Sigmoid colon (tissue), 7 donors: ENCODE measurements at regions of chr3 and their contacts with region 1.

Region 1: DNA sequence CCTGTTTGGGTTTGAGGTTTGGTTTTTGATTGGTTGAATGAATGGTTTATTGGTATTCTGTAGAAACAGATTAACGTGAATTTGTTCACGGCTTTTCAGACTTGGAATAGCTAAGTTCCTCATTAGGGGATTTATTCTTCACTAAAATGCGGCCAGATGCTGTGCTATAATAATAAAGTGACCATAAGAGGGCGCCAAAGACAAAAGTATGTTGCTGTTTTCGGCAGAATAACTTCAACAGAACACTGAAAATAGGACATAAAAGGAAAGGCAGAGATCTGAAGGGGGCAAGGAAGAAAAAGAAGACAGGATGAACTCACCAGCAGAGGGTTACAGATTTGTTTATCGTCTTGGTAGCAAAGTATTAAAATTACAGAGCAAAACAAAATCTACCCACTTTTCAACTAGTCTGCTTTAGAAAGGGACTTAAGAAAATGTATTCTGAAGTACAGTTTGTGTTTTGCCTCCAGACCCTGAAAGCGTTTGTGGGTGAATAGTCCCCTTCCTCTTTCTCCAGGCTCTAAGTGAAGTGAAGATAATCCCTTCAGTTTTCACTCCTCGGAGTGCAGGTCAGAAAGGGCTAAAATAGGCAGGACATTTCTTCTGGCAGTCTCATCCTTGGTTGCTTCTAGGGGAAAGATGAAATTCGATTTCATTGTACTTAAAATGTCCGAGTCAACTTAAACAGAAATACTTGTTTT is 147.6 kb downstream of the IL20RB start:
- DNase-seq: no peak
- H3K4me3 ChIP-seq: no peak overlapping the region
- H3K27ac ChIP-seq: no peak overlapping the region
- H3K4me1 ChIP-seq: peaks cover 0 to 7% (median 3%) of the 10 kb centered on the region in 4 donors
- H3K27me3 ChIP-seq: no peaks in the 10 kb centered on the region
- CTCF ChIP-seq: peak in 3 of 4 experiments; percentile 40 to 65 (median 44)
- EP300 ChIP-seq: no peak
- POLR2A ChIP-seq: no peak

Region 2: DNA sequence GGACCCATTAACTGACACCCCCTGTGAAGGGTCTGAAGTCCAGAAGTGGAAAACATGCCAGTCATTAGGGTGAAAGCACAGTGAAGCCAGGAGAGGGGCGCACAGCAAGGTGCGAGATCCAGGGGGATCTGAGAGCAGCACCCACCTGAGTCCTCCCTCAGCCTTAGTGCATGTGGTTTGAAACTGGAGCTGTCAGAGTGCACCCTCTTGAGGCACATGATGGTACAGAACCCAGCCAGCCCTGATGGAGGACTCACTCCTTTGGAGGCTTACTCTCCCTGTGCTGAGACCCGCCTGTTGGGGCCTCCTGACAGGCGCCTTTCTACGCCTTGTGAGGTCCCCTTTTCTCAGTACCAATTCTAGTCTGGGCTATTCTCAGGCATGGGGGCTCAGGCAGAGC is 69.8 kb before region 1 on chr3:
- intact Hi-C with region 1: no loop called
- DNase-seq: no peak
- H3K4me3 ChIP-seq: no peak overlapping the region
- H3K27ac ChIP-seq: no peak overlapping the region
- H3K4me1 ChIP-seq: peaks cover 0 to 5% (median 2%) of the 10 kb centered on the region in 4 donors
- H3K27me3 ChIP-seq: no peaks in the 10 kb centered on the region
- CTCF ChIP-seq: no peak
- EP300 ChIP-seq: no peak
- POLR2A ChIP-seq: no peak

Region 3: GRCh38 chr3:137946345-137946973 is 841.0 kb after region 1 on chr3:
- intact Hi-C with region 1: loop called (anchors 2 kb)
- DNase-seq: peak; percentile 65
- H3K4me3 ChIP-seq: no peak overlapping the region
- H3K27ac ChIP-seq: no peak overlapping the region
- H3K4me1 ChIP-seq: no peaks in the 10 kb centered on the region
- H3K27me3 ChIP-seq: no peaks in the 10 kb centered on the region
- CTCF ChIP-seq: peak; percentile 4 to 69 (median 40)
- EP300 ChIP-seq: no peak
- POLR2A ChIP-seq: no peak

Region 4: GRCh38 chr3:137970914-137971831 is 865.7 kb after region 1 on chr3:
- intact Hi-C with region 1: loop called (anchors 10 kb)
- DNase-seq: peak; percentile 78
- H3K4me3 ChIP-seq: no peak overlapping the region
- H3K27ac ChIP-seq: no peak overlapping the region
- H3K4me1 ChIP-seq: peaks cover 0 to 3% (median 0%) of the 10 kb centered on the region in 4 donors
- H3K27me3 ChIP-seq: no peaks in the 10 kb centered on the region
- CTCF ChIP-seq: peak; percentile 9 to 80 (median 54)
- EP300 ChIP-seq: no peak
- POLR2A ChIP-seq: no peak